ENCODE measurements at regions of chr15 and their contacts with region 1.

Region 1: GRCh38 chr15:32956006-32956405 is 238.2 kb downstream of the GREM1 start:
- DNase-seq: peak; percentile 63
- H3K4me3 ChIP-seq: no peak overlapping the region
- H3K27ac ChIP-seq: no peak overlapping the region
- H3K4me1 ChIP-seq: no peaks in the 10 kb centered on the region
- CTCF ChIP-seq: peak; percentile 91

Region 2: DNA sequence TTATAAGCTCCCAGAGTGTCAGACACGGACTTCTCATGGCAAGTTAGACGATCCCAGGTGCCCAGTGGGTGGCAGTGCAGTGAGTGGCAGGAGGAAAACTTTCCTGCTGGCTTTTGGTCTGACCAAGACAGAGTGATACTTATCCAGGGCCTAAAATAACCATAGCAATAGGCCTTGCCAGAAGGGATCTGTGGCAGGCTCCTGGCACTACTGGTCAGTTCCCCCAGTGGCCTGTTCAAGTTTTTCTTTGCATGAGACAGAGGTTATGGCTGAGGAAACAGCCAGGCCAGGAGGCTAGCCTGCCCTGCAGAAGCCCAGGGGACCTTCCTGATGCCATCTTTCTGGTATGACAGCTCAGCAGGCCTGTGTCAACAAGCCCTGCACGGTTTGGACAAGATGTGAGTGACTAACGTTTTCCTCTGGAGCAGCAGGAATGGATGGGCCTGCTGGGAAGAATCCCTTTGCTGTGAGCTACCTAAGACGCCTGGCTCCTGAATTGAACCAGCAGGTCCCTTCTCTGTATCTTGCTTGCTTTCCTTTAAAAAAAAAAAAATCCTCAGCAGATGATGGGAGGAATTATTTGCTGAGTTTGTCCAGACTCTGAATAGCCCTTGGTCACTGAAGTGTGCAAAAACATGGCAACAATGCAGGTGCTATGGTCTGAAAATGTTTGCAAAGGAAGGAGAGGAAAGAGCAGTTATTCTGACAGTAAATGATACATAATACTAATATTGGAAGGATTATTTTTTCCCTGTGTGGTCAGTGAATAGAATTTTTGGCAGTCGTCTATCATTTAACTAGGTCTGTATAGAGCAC is 296.5 kb before region 1 on chr15:
- CTCF ChIA-PET with region 1: no interaction called
- POLR2A ChIA-PET with region 1: interaction called, 10 read pairs
- intact Hi-C with region 1: no loop called
- DNase-seq: no peak
- H3K4me3 ChIP-seq: no peak overlapping the region
- H3K27ac ChIP-seq: no peak overlapping the region
- H3K4me1 ChIP-seq: no peaks in the 10 kb centered on the region
- CTCF ChIP-seq: no peak

Region 3: GRCh38 chr15:32844118-32844711 is 111.8 kb before region 1 on chr15:
- CTCF ChIA-PET with region 1: no interaction called
- POLR2A ChIA-PET with region 1: interaction called, 4 read pairs
- intact Hi-C with region 1: loop called (anchors 5 kb)
- DNase-seq: peak; percentile 61
- H3K4me3 ChIP-seq: no peak overlapping the region
- H3K27ac ChIP-seq: no peak overlapping the region
- H3K4me1 ChIP-seq: no peaks in the 10 kb centered on the region
- CTCF ChIP-seq: peak; percentile 86

Region 4: GRCh38 chr15:32884146-32884545 is 71.9 kb before region 1 on chr15:
- CTCF ChIA-PET with region 1: no interaction called
- POLR2A ChIA-PET with region 1: interaction called, 3 read pairs
- intact Hi-C with region 1: loop called (anchors 5 kb)
- DNase-seq: no peak
- H3K4me3 ChIP-seq: no peak overlapping the region
- H3K27ac ChIP-seq: no peak overlapping the region
- H3K4me1 ChIP-seq: no peaks in the 10 kb centered on the region
- CTCF ChIP-seq: no peak

Region 5: DNA sequence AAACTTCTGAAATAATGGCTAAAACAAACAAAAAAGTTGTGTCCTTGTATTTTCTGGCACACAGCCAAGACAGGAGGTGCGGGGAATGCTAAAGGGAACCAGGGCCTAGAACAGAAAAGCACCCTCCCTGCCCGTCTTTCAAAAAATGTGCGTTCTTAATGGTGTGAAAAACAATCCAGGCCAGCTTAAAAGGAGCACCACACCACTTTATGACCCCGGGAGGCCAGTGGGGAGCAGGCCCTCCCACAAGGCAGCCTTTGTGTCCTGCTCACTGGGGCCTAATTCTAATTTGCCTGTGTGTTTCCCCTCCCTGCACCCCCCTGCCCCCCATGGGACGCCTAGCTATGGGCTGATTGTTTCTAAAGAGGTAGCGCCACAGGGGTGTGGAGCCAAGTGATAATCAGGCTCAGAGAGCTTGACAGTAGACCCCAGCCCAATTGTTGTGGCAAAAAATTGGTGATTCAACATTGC is 56.8 kb before region 1 on chr15:
- CTCF ChIA-PET with region 1: no interaction called
- POLR2A ChIA-PET with region 1: interaction called, 3 read pairs
- intact Hi-C with region 1: loop called (anchors 5 kb)
- DNase-seq: peak; percentile 68
- H3K4me3 ChIP-seq: no peak overlapping the region
- H3K27ac ChIP-seq: no peak overlapping the region
- H3K4me1 ChIP-seq: peaks cover 38% of the 10 kb centered on the region
- CTCF ChIP-seq: no peak

Region 6: DNA sequence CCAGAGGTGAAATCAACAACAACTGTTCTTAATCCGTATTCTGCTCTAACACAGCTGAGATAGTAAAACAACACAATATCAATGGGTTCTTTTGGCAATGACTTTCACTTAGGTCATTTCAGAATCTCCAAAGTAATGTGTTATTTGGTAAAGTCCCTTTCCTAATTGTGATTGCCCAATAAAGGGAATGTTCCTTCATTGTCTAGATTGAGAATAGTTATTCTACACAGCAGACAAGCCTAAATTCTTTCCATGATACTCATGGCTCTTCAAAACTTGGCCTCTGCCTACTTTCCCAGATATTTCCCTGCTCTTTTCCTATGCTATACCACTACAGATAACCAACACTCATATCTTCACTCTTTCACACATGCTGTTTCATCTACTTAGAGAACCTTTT is 18.7 kb after region 1 on chr15:
- CTCF ChIA-PET with region 1: no interaction called
- POLR2A ChIA-PET with region 1: interaction called, 11 read pairs
- intact Hi-C with region 1: no loop called
- DNase-seq: no peak
- H3K4me3 ChIP-seq: no peak overlapping the region
- H3K27ac ChIP-seq: no peak overlapping the region
- H3K4me1 ChIP-seq: no peaks in the 10 kb centered on the region
- CTCF ChIP-seq: no peak

Region 7: DNA sequence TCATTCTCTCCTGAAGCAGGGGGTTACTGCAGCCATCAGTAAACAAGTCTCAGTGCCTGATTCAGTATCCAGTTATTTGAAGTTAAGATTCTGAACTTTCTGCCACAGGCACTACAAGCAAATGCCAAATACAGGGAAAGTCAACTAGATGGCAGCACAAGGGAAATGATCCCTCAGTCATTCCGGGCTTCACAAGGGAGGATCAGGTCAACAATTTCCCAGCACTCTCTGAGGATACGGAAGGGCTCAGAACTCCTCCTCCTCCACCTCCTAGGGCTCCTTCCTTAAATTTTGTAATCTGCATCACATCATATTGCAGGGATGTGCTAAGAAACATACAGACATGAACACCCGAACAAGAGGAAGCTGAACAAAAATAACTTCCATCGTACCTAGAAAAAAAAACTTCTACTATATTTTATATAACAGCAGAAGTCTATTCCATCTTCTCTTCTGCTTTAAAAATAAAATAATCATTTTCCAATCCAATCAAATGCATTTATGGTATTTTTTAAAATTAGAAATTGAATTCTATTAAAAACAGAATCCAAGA is 51.4 kb after region 1 on chr15:
- CTCF ChIA-PET with region 1: no interaction called
- POLR2A ChIA-PET with region 1: no interaction called
- intact Hi-C with region 1: no loop called
- DNase-seq: no peak
- H3K4me3 ChIP-seq: no peak overlapping the region
- H3K27ac ChIP-seq: no peak overlapping the region
- H3K4me1 ChIP-seq: peaks cover 9% of the 10 kb centered on the region
- CTCF ChIP-seq: 0 out of 2 replicates have a peak, but pooled peaks have one; percentile 23

Region 8: DNA sequence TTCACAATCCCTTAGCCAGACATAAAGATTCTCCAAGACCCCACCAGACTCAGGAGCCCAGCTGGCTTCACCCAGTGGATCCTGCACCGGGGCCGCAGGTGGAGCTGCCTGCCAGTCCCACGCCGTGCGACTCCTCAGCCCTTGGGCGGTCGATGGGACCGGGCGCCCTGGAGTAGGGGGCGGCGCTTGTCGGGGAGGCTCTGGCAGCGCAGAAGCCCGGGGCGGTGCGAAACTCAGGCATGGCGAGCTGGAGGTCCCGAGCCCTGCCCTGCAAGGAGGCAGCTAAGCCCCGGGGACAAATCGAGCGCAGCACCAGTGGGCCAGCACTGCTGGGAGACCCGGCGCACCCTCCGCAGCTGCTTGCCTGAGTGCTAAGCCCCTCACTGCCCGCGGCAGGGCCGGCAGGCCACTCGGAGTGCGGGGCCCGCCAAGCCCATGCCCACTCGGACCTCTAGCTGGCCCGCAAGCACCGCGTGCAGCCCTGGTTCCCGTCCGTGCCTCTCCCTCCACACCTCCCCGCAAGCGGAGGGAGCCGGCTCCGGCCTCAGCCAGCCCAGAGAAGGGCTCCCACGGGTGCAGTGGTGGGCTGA is 63.4 kb after region 1 on chr15:
- CTCF ChIA-PET with region 1: no interaction called
- POLR2A ChIA-PET with region 1: no interaction called
- intact Hi-C with region 1: no loop called
- DNase-seq: no peak
- H3K4me3 ChIP-seq: no peak overlapping the region
- H3K27ac ChIP-seq: no peak overlapping the region
- H3K4me1 ChIP-seq: no peaks in the 10 kb centered on the region
- CTCF ChIP-seq: no peak

Measured in OCI-LY7 (cell line).